Activated naive CD4-positive, alpha-beta T cell treated with anti-CD3 and anti-CD28 coated beads for 36 hours (primary cell): ENCODE measurements at regions of chr16 and their contacts with region 1.

Region 1: GRCh38 chr16:26795184-26795583 is 271.5 kb upstream of the C16orf82 start:
- DNase-seq: peak; percentile 39
- H3K4me3 Mint-ChIP-seq: no peak overlapping the region
- H3K27ac Mint-ChIP-seq: no peak overlapping the region
- H3K4me1 Mint-ChIP-seq: no peaks in the 10 kb centered on the region
- H3K27me3 Mint-ChIP-seq: peaks cover 31% of the 10 kb centered on the region

Region 2: DNA sequence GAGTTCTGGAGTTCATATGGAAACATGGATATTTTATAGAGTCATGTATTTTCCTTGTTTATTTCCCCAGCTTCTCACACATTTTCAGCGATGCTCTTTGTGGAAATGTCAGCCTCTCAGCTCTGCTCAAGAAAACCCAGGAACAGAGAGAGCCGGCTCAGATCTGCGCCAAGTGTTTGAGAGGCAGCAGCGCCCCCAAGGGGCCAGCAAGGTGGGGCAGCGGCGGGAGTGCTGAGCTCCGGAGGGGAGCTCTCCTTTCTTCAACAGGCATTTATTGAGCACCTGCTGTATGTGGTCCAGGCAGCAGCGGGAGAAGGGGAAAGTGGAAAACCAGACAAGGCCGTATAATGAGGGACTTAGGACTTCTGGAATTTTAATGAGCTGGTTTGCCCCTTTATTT is 149.6 kb before region 1 on chr16:
- CTCF ChIA-PET with region 1: interaction called, 5 read pairs
- intact Hi-C with region 1: loop called (anchors 10 kb)
- DNase-seq: peak; percentile 81
- H3K4me3 Mint-ChIP-seq: no peak overlapping the region
- H3K27ac Mint-ChIP-seq: no peak overlapping the region
- H3K4me1 Mint-ChIP-seq: peaks cover 11% of the 10 kb centered on the region
- H3K27me3 Mint-ChIP-seq: peaks cover 12% of the 10 kb centered on the region